Dendritic cell treated with granulocyte-macrophage colony-stimulating factor and Interleukin-4, amounts not matched to agents 40 ng/mL and 50 ng/mL, for 4 days (primary cell): ENCODE measurements at regions of chr6 and their contacts with region 1.

Region 1: DNA sequence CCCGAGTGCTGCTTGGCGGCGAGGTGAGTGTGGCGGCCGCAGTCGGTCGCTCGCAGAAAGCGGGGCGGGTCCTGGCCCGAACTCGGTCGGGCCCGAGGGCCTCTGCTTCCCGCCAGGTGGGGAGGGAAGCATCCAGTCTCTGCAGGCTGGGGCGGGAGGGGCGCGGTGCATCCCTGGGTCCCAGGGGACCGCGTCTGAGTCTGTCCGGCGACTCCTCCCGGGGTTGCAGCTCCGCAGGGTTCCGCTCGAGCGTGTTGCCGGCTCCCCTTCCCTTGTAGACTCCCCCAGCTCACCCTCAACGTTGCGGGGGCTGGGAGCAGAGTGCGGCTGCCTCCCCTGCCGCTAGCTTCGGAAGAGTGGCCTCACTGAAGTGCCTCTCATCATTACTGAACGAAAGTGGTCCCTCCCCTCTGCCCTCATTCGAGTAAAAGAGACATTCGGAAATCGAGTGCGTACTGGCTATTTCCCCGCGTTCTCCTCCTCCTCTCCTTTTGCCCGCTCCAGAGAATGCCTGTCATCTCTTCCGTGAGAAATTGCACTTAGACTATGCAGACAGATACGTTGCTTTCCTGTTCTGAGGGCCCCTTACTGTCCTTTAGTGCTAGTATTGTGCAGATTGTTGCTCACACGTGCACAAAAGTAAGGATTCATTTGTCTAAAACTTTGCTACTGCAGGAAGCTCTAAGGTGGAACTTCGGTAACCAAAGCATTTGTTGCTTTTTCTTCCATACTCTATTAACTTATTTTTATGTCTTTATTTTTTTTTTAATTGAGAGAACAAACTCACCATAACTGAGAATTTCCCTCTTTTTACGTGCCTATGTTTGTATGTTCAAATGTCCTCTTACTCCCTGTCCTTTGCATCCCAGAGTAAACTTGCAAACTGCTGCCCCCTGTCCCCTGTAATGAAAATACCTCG is 751 bp downstream of the MAP3K4 start:
- H3K4me3 Mint-ChIP-seq: peak overlapping the region; percentile 89
- H3K27ac Mint-ChIP-seq: peak overlapping the region; percentile 89
- H3K4me1 Mint-ChIP-seq: peaks cover 46% of the 10 kb centered on the region
- H3K27me3 Mint-ChIP-seq: peaks cover 2% of the 10 kb centered on the region

Region 2: DNA sequence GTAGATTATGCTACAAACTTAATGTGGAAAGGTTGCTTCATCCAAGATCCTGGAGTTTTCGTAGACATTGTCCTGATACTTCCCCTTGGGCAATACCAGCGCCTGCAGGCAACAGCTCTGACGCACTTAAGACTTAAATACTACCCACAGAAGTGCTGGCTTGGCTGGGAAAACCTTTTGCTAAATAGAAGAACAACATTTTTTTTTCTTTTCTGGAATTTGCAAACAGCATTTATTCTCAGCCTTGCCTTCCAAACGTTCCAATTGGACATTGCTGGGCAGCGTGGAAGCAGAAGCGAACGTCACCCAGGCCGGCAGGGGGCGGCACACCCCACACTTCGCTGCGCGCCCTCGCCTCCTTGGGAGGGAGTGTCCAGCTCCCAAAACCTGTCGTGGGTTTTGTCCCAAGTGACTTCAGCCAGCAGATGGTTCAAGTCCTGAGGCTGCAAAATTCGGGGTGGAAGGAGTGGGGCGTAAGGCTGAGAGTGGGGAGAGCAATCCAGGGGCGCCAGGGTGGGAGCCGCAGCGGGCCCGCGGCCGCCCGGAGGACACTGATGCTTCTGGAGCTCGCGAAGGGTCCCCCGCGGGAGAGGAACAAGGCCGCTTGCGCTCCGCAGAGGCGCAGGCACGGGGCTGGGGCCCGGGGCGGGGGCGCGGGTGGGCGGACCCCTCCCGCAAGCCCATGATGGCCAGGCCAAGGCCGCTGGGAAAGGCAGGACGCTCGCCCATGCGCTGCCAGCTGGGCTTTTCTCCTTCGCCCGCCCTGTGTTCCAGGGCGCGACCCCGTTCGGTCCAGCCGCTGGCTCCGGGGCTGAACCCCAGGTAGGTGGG is 61.6 kb before region 1 on chr6:
- intact Hi-C with region 1: loop called (anchors 1 kb)
- H3K4me3 Mint-ChIP-seq: peak overlapping the region; percentile 72
- H3K27ac Mint-ChIP-seq: no peak overlapping the region
- H3K4me1 Mint-ChIP-seq: peaks cover 12% of the 10 kb centered on the region
- H3K27me3 Mint-ChIP-seq: peaks cover 42% of the 10 kb centered on the region

Region 3: GRCh38 chr6:161273752-161274487 is 281.6 kb after region 1 on chr6 and contains the start of gene AGPAT4:
- intact Hi-C with region 1: loop called (anchors 5 kb)
- H3K4me3 Mint-ChIP-seq: peak within 1 kb of the TSS; percentile 77
- H3K27ac Mint-ChIP-seq: peak within 1 kb of the TSS; percentile 90
- H3K4me1 Mint-ChIP-seq: peaks cover 36% of the 10 kb centered on the region
- H3K27me3 Mint-ChIP-seq: peaks cover 8% of the 10 kb centered on the region

Region 4: GRCh38 chr6:162727309-162728182 is 1735.2 kb after region 1 on chr6 and contains the starts of genes PACRG and PRKN:
- intact Hi-C with region 1: loop called (anchors 10 kb)
- H3K4me3 Mint-ChIP-seq: peak within 1 kb of the TSS; percentile 87
- H3K27ac Mint-ChIP-seq: peak within 1 kb of the TSS; percentile 82
- H3K4me1 Mint-ChIP-seq: peaks cover 14% of the 10 kb centered on the region
- H3K27me3 Mint-ChIP-seq: peaks cover 2% of the 10 kb centered on the region